ENCODE measurements at regions of chr12 and their contacts with region 1.

Region 1: GRCh38 chr12:42475106-42475505 is 114.4 kb downstream of the PRICKLE1 start:
- DNase-seq: no peak
- H3K4me3 ChIP-seq: no peak overlapping the region
- H3K27ac ChIP-seq: no peak overlapping the region
- H3K4me1 ChIP-seq: peaks cover 33% of the 10 kb centered on the region
- H3K27me3 ChIP-seq: no peaks in the 10 kb centered on the region
- CTCF ChIP-seq: no peak
- POLR2A ChIP-seq: no peak

Region 2: GRCh38 chr12:42641221-42641885 is 166.2 kb after region 1 on chr12:
- intact Hi-C with region 1: loop called (anchors 5 kb)
- DNase-seq: no peak
- H3K4me3 ChIP-seq: no peak overlapping the region
- H3K27ac ChIP-seq: no peak overlapping the region
- H3K4me1 ChIP-seq: no peaks in the 10 kb centered on the region
- H3K27me3 ChIP-seq: no peaks in the 10 kb centered on the region
- CTCF ChIP-seq: no peak
- POLR2A ChIP-seq: no peak

Measured in vagina (tissue), 2 donors.